HEK293 (cell line): ENCODE measurements at regions of chr9 and their contacts with region 1.

Region 1: GRCh38 chr9:113401027-113401792 is at the start of gene ALAD:
- H3K4me3 ChIP-seq: peak within 1 kb of the TSS; percentile 88
- H3K27ac ChIP-seq: no peak within 1 kb of the TSS; the same call in 1 of the 2 replicates
- H3K4me1 ChIP-seq: peaks cover 2% of the 10 kb centered on the region; the same call in 1 of the 2 replicates
- CTCF ChIP-seq: peak; percentile 91

Region 2: GRCh38 chr9:113196967-113197366 is 204.2 kb before region 1 on chr9:
- CTCF ChIA-PET with region 1: no interaction called
- POLR2A ChIA-PET with region 1: no interaction called
- H3K4me3 ChIP-seq: no peak overlapping the region
- H3K27ac ChIP-seq: no peak overlapping the region
- H3K4me1 ChIP-seq: no peaks in the 10 kb centered on the region
- CTCF ChIP-seq: no peak

Region 3: DNA sequence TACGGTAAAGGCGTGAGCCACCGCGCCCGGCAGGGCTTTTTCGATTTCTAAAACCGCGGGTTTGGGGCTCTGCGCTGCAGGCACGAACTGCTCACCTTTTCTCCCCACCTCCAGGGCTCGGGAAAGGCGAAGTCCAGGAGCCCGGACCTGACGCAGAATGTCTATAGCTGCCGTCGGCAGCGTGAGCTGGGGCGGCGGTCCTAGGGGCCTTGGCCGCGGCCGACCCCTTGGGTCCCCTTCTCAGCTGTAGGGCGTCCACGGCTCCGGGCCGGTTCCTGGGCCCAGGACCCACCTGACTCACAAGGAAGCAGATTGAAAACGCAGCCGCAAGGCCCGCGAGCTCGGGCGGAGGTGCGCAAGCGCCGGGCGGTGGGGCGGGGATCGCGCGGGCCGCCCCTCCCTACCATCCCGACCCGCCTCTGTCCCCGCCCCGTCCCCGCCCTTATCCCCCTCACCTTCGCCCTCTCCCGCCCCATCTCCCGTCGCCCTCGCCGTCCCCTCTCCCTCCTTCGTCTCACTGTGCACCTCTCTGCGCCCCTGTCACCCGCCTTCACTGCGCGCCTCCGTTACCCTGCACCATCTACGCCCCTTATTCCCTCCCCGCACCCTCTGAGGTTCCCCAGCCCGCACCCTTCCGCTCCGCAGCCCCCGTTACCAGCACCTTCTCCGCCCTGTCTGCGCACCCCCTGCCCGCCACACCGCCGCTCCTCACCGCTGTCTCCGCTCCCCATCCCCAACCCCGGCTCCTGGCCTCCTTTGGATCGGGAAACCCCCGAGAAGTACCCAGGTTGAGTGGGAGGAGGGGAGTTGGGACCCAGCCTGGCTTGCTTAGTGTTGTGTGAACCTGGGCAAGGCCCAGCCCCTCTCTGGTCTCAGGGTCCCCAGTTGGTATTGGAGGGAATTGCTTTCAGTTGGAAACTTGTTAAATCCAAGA is 24.3 kb before region 1 on chr9 and contains the start of gene HDHD3:
- CTCF ChIA-PET with region 1: interaction called, 4 read pairs
- POLR2A ChIA-PET with region 1: interaction called, 10 read pairs
- H3K4me3 ChIP-seq: peak within 1 kb of the TSS; percentile 64
- H3K27ac ChIP-seq: peak within 1 kb of the TSS; percentile 81
- H3K4me1 ChIP-seq: peaks cover 3% of the 10 kb centered on the region; the same call in 1 of the 2 replicates
- CTCF ChIP-seq: no peak

Region 4: DNA sequence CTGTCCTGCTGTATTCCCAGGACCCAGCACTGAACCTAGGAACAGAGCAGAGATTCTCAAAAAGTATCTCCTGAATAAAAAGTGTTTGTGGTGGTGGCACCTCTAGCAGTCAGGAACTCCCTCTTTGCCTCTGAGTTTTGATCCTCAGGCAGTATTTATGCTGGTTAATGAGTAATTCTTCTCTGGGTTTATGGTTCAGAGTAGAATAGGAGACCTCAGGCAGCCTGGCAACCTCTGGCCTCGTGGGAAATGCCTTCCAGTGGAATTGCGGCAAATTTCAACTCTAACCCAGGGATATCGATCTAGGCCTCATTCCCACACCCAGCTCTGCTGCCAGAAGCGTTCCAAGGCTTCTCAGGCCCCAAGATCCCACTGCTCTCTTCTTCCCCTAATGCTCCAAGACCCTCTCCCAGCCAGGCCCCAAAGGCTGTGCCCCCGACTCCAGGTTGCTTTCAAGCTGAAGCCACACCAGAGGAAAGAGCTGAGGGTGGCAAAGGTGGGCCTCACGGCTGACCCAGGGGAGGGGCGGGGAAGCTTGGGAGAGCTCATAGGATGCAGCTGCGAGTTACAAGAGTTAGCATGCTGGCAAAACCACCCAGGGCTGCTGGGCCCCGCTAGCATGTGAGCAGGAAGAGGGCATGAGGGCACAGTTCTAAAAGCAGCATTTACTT is 13.5 kb before region 1 on chr9:
- CTCF ChIA-PET with region 1: interaction called, 13 read pairs
- POLR2A ChIA-PET with region 1: interaction called, 7 read pairs
- H3K4me3 ChIP-seq: no peak overlapping the region
- H3K27ac ChIP-seq: no peak overlapping the region
- H3K4me1 ChIP-seq: no peaks in the 10 kb centered on the region
- CTCF ChIP-seq: no peak